Posterior vena cava (tissue), 2 donors: ENCODE measurements at regions of chr16 and their contacts with region 1.

Region 1: DNA sequence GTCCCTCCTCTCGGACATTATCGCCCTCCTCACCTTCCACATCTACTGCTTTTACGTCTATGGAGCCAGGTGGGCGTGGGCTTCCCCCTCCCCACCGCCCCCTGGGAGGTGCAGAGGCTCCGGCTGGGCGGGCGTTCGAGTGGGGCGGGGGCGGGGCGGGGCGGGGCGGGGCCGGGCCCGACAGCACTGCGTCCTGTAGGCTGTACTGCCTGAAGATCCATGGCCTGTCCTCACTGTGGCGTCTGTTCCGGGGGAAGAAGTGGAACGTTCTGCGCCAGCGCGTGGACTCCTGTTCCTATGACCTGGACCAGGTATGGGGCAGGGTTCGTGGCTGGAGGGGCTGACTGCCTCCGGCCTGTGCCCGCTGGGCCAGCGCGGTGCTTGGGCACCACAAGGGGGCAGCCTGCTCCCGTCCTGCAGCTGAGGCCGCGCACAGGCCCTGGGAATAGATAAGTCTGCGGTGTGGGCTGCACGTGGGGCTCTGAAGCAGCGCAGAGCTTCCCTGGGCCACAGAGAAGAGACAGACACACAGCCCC is 9.2 kb downstream of the PIGQ start:
- DNase-seq: peak; percentile 92

Region 2: GRCh38 chr16:554640-555365 is 24.1 kb before region 1 on chr16:
- intact Hi-C with region 1: loop called in 1 of 2 experiments (anchors 1 kb)
- DNase-seq: no peak

Region 3: GRCh38 chr16:660459-661183 is 81.7 kb after region 1 on chr16:
- intact Hi-C with region 1: loop called in 1 of 2 experiments (anchors 5 kb)
- DNase-seq: peak; percentile 97